GM12878 (cell line): ENCODE measurements at regions of chr12 and their contacts with region 1.

Region 1: DNA sequence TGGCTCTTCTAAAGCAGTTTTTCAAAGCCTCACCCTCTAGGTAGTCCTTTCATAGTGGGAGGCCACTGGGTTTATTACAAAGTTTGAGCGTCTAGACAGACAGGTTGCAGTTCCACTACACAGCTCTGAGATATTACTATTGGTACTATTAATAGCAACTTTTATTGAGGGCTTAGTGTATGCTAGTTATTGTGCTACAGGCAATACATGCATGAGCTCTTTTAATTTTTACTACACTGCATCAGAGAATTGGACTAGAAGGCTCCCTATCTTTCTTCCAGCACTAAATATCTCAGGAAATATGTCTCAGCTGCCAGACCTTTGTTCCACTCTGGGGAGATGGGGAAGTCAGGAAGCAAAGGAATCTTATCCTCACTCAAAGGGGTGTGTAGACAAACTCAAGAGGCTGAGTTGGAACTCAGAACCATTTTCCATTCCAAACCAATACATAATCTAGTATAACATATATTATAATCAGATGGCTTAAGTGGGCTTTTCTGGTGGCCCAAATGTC is 161.8 kb upstream of the SLC38A2 start:
- DNase-seq: no peak
- ATAC-seq: no peak
- H3K4me3 ChIP-seq: no peak overlapping the region
- H3K27ac ChIP-seq: no peak overlapping the region
- H3K4me1 ChIP-seq: peaks cover 12% of the 10 kb centered on the region
- H3K27me3 ChIP-seq: no peaks in the 10 kb centered on the region
- CTCF ChIP-seq: no peak
- EP300 ChIP-seq: no peak
- POLR2A ChIP-seq: no peak
- RAD21 ChIP-seq: no peak

Region 2: DNA sequence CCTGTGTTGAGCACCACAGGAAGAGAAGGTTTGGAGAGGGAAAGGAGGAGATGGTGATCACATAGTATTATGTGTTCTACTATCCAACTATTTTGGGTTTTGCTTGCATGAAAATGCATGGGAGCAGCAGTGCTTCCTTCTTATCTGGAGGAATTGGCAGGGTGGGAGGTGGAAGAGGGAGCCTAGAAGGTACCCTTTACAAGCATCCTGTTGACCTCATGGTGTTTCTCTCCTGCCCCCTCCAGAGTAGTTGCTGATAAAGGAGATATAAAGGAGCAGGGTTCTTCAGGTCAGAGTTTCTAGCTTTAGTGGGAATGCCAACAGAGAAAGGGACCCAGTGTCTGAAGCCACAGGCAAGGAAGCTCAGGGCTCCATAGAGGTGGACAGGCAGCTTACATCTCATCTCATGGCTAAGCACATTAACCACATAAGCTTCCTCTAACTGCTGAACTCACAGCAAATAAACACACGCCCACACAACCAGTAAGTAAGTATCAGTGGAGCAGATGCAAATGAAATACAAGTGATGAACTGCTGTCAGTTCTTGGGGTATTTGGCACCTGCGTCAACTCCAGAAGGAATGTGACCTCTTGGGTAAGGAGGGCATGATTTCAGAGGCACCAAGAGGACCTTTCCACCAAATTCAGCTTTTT is 12.4 kb after region 1 on chr12:
- CTCF ChIA-PET with region 1: interaction called, 3 read pairs
- POLR2A ChIA-PET with region 1: no interaction called
- RAD21 ChIA-PET with region 1: interaction called, 6 read pairs
- SMC1A ChIA-PET with region 1: interaction called, 11 read pairs
- in situ Hi-C with region 1: no loop called
- intact Hi-C with region 1: no loop called
- DNase-seq: peak; percentile 25
- ATAC-seq: peak; percentile 93
- H3K4me3 ChIP-seq: no peak overlapping the region
- H3K27ac ChIP-seq: no peak overlapping the region
- H3K4me1 ChIP-seq: peaks cover 13% of the 10 kb centered on the region
- H3K27me3 ChIP-seq: no peaks in the 10 kb centered on the region
- CTCF ChIP-seq: no peak
- EP300 ChIP-seq: peak; percentile 22 to 35; a peak in 1 of 4 replicates
- POLR2A ChIP-seq: no peak
- RAD21 ChIP-seq: no peak